PC-3 (cell line): ENCODE measurements at regions of chrX and their contacts with region 1.

Region 1: DNA sequence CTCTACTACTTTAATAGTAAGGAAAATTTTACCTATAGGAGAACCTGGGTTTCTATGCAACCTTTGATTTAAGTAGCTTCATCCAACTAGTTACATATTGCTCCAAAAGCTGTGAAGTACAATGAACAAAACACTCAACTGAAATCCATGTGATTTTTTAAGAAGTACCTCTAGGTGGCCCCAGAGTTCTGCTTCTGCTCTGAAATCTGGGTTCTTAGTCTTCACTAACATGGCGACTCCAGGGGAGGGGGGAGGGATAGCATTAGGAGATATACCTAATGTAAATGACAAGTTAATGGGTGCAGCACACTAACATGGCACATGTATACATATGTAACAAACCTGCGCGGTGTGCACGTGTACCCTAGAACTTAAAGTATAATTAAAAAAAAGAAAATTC is 73.4 kb upstream of the MAGEB2 start:
- DNase-seq: peak; percentile 63
- ATAC-seq: peak; percentile 43
- H3K4me3 ChIP-seq: no peak overlapping the region
- H3K27ac ChIP-seq: no peak overlapping the region
- H3K4me1 ChIP-seq: peaks cover 3% of the 10 kb centered on the region; the same call in 1 of the 2 replicates
- H3K27me3 ChIP-seq: no peaks in the 10 kb centered on the region
- CTCF ChIP-seq: peak; percentile 58

Region 2: DNA sequence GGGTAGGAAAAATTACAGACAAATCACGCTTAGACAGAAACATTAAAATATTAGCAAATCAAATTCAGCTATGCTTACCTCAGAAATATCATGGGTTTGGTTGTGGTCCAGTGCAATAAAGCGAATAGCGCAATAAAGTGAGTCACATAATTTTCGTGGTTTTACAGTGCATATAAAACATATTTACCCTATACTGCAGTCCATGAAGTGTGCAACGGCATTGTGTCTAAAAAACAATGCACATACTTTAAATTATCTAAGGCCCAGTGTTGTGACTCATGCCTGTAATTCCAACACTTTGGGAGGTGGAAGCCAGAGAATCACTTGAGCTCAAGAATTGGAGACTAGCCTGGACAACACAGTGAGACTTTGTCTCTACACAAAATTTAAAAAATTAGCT is 1750.4 kb before region 1 on chrX:
- CTCF ChIA-PET with region 1: no interaction called
- POLR2A ChIA-PET with region 1: no interaction called
- intact Hi-C with region 1: no loop called
- DNase-seq: peak; percentile 88
- ATAC-seq: peak; percentile 98
- H3K4me3 ChIP-seq: no peak overlapping the region
- H3K27ac ChIP-seq: peak overlapping the region; percentile 39; the same call in 1 of the 2 replicates
- H3K4me1 ChIP-seq: no peaks in the 10 kb centered on the region
- H3K27me3 ChIP-seq: no peaks in the 10 kb centered on the region
- CTCF ChIP-seq: no peak

Region 3: DNA sequence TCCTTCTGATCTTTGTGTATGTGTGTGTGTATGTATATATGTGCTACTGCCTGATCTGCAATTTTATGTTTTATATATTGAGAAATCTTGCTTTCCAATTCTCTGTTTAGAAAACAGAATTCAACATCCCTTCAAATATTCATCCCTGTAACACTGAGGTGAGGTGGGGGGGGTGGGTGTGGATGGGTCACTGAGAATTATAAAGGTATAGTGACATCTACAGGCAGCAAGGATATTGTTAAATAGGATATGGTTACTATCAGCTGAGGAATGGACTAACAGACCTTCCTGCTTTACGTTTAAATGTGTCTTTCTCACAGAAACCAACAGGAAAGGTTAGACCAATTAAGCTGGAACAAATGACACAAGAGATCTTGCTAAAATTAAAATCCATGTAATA is 54.4 kb after region 1 on chrX:
- CTCF ChIA-PET with region 1: no interaction called
- POLR2A ChIA-PET with region 1: interaction called, 3 read pairs
- intact Hi-C with region 1: loop called (anchors 2 kb)
- DNase-seq: peak; percentile 38
- ATAC-seq: peak; percentile 49; the same call in 1 of the 2 replicates
- H3K4me3 ChIP-seq: no peak overlapping the region
- H3K27ac ChIP-seq: no peak overlapping the region
- H3K4me1 ChIP-seq: no peaks in the 10 kb centered on the region
- H3K27me3 ChIP-seq: peaks cover 24% of the 10 kb centered on the region
- CTCF ChIP-seq: peak; percentile 50

Region 4: DNA sequence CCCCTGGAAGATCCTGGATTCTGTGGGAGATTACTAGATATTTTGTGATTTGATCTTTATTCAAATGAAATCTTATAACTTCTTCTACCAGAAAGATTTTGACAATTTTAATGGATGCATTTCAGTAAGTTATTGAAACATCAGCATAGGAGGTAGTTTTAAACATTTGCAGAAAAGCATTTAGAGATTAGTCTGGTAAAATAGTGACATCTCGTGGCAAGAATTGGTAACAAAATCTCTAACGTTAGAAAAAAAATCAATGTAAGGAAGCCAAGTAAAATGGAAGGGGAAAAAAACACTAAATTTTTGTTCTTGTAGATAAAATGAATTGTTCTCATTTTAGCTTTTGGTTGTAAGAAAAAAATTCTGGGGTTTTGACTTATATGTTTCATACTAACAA is 362.3 kb after region 1 on chrX:
- CTCF ChIA-PET with region 1: interaction called, 9 read pairs
- POLR2A ChIA-PET with region 1: no interaction called
- intact Hi-C with region 1: loop called (anchors 2 kb)
- DNase-seq: peak; percentile 64
- ATAC-seq: no peak
- H3K4me3 ChIP-seq: no peak overlapping the region
- H3K27ac ChIP-seq: no peak overlapping the region
- H3K4me1 ChIP-seq: no peaks in the 10 kb centered on the region
- H3K27me3 ChIP-seq: peaks cover 11% of the 10 kb centered on the region
- CTCF ChIP-seq: peak; percentile 71